Sigmoid colon (tissue), 7 donors: ENCODE measurements at regions of chr1 and their contacts with region 1.

Region 1: DNA sequence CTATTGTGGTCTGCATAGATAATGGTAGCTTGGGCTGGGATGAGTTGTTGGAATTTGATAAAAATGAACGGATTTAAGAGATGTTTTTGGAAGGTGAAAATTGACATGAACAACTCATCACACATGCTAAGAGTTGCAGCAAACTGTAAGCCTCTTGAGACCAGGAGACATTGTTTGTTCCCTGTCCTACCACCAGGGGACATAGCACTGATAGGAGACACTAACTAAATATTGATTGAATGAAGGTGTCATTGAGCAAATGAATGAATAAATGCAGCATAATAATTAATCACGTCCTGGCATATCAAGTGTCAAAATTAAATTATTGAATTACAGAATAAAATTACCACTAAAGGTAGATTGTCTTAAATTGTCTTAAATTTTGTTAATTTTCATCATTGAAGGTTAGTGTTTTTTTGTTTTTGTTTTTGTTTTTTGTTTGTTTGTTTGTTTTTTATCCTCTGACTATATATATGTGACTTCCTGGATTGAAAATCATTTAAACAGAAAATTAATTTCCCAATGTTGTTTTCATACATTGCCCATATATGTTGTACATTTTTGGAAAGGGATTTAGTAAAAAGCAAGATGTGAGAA is 285.3 kb upstream of the C1orf105 start:
- DNase-seq: no peak
- H3K4me3 ChIP-seq: no peak overlapping the region
- H3K27ac ChIP-seq: peak overlapping the region in 1 of 4 donors; percentile 91
- H3K4me1 ChIP-seq: peaks cover 0 to 18% (median 11%) of the 10 kb centered on the region in 4 donors
- H3K27me3 ChIP-seq: no peaks in the 10 kb centered on the region
- CTCF ChIP-seq: peak in 3 of 4 experiments; percentile 23 to 39 (median 27)
- EP300 ChIP-seq: no peak
- POLR2A ChIP-seq: no peak

Region 2: DNA sequence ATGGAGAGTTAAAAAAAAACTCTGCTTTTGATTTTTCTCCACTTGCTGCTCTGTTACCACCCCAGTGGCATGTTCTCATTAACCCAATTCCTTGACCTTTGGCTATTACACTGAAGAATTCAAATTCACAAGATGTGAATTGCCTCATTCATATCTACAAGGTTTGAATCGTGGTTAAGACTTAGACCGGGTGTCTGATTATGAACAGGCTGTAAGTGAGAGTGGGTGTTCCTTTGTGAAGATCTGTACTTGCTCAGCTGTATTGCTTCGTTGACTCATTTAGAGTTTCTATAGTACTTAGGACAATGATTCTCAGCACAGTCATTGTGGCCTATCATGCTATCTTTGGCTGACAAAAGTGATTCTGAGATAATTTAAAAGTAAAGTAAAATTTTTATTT is 257.5 kb before region 1 on chr1:
- intact Hi-C with region 1: no loop called
- DNase-seq: no peak
- H3K4me3 ChIP-seq: no peak overlapping the region
- H3K27ac ChIP-seq: no peak overlapping the region
- H3K4me1 ChIP-seq: no peaks in the 10 kb centered on the region
- H3K27me3 ChIP-seq: no peaks in the 10 kb centered on the region
- CTCF ChIP-seq: no peak
- EP300 ChIP-seq: no peak
- POLR2A ChIP-seq: no peak

Region 3: GRCh38 chr1:172041742-172042141 is 93.4 kb before region 1 on chr1:
- intact Hi-C with region 1: loop called (anchors 5 kb)
- DNase-seq: no peak
- H3K4me3 ChIP-seq: no peak overlapping the region
- H3K27ac ChIP-seq: no peak overlapping the region
- H3K4me1 ChIP-seq: no peaks in the 10 kb centered on the region
- H3K27me3 ChIP-seq: no peaks in the 10 kb centered on the region
- CTCF ChIP-seq: peak in 3 of 4 experiments; percentile 36 to 46 (median 39)
- EP300 ChIP-seq: no peak
- POLR2A ChIP-seq: no peak

Region 4: DNA sequence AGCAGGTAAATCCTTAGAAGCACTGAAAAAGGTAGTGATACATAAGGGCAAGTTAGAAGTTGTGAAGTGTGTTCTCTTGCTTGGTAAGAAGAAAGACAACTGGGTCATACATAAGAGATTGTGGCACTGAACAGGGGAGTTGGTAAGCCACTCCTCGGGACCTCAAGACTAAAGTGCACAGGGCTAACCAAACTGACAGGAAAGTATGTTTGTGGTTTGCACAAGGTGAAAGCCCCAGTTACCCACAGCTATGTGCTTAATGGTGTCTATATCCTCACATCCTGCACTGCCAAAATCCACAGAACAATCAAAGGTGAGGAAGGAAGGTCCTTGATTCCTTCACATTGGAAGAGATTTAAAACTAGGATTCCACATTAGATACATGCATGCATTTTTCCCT is 17.4 kb before region 1 on chr1:
- intact Hi-C with region 1: no loop called
- DNase-seq: no peak
- H3K4me3 ChIP-seq: no peak overlapping the region
- H3K27ac ChIP-seq: no peak overlapping the region
- H3K4me1 ChIP-seq: peaks cover 0 to 13% (median 3%) of the 10 kb centered on the region in 4 donors
- H3K27me3 ChIP-seq: no peaks in the 10 kb centered on the region
- CTCF ChIP-seq: no peak
- EP300 ChIP-seq: no peak
- POLR2A ChIP-seq: no peak

Region 5: GRCh38 chr1:172332230-172332629 is 197.1 kb after region 1 on chr1:
- intact Hi-C with region 1: no loop called
- DNase-seq: no peak
- H3K4me3 ChIP-seq: no peak overlapping the region
- H3K27ac ChIP-seq: no peak overlapping the region
- H3K4me1 ChIP-seq: no peaks in the 10 kb centered on the region
- H3K27me3 ChIP-seq: no peaks in the 10 kb centered on the region
- CTCF ChIP-seq: no peak
- EP300 ChIP-seq: no peak
- POLR2A ChIP-seq: no peak